Vagina (tissue), 2 donors: ENCODE measurements at regions of chrX and their contacts with region 1.

Region 1: GRCh38 chrX:56813318-56813837 is 84.3 kb downstream of the NBDY start:
- DNase-seq: peak; percentile 87 to 96
- H3K4me3 ChIP-seq: no peak overlapping the region
- H3K27ac ChIP-seq: peak overlapping the region; percentile 45
- H3K4me1 ChIP-seq: peaks cover 8% of the 10 kb centered on the region
- H3K27me3 ChIP-seq: no peaks in the 10 kb centered on the region
- CTCF ChIP-seq: no peak
- POLR2A ChIP-seq: no peak

Region 2: DNA sequence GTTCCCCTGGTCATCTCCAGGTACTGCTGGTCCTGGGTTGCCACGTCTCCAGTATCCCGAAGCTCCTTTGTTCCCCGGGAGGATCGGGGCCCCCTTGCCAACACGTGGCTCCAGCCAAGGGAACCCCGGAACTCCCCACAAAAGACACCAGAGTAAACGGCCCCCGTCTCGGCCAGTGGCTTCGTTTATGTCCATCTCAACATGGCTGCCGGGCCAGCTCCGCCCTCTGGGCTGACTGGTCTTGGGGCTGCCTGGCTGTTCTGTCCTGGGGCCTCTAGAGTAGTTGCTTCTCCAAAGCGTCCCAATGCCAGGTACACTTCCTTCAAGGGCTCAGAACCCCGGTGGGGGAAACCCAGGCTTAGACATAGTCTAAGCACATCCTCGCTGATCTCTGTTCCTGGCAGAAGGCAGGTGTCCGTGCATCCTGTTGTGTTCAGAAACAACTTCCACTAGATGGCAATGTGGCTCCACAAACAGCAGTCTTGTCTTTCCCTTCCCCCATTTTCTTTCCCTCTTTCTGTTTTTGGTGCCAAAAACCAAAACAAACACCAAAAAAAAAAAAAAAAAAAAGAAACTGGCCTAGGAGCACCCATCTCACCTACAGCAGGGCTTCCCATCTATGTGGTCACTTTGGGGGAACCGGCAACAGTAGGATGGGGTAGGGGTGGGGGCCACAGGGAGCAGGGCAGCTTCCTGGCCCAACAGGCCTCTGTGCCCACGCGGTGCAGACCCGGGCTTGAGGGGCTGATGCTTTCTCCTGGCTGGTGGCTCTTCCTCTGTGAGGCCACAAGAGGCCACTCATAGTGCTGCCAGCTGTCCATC is 49.0 kb before region 1 on chrX:
- intact Hi-C with region 1: no loop called
- DNase-seq: peak; percentile 91 to 93
- H3K4me3 ChIP-seq: peak overlapping the region; percentile 48 to 55
- H3K27ac ChIP-seq: peak overlapping the region; percentile 86
- H3K4me1 ChIP-seq: peaks cover 47% of the 10 kb centered on the region
- H3K27me3 ChIP-seq: no peaks in the 10 kb centered on the region
- CTCF ChIP-seq: peak; percentile 39 to 72 (median 61)
- POLR2A ChIP-seq: no peak

Region 3: GRCh38 chrX:57353472-57354132 is 540.2 kb after region 1 on chrX:
- intact Hi-C with region 1: loop called (anchors 5 kb)
- DNase-seq: no peak
- H3K4me3 ChIP-seq: no peak overlapping the region
- H3K27ac ChIP-seq: no peak overlapping the region
- H3K4me1 ChIP-seq: no peaks in the 10 kb centered on the region
- H3K27me3 ChIP-seq: no peaks in the 10 kb centered on the region
- CTCF ChIP-seq: no peak
- POLR2A ChIP-seq: no peak